Natural killer cell (primary cell): ENCODE measurements at regions of chr6 and their contacts with region 1.

Region 1: GRCh38 chr6:106300944-106301343 is 24.6 kb downstream of the ATG5 start:
- DNase-seq: peak in 1 of 2 donors; percentile 57
- ATAC-seq: peak in 1 of 3 donors; percentile 53
- H3K4me3 ChIP-seq: no peak overlapping the region
- H3K4me3 Mint-ChIP-seq: no peak overlapping the region
- H3K27ac ChIP-seq: no peak overlapping the region
- H3K27ac Mint-ChIP-seq: no peak overlapping the region
- H3K4me1 ChIP-seq: no peaks in the 10 kb centered on the region
- H3K4me1 Mint-ChIP-seq: peaks cover 11 to 16% of the 10 kb centered on the region in 2 donors
- H3K27me3 ChIP-seq: no peaks in the 10 kb centered on the region
- H3K27me3 Mint-ChIP-seq: no peaks in the 10 kb centered on the region
- CTCF ChIP-seq: peak; percentile 34

Region 2: GRCh38 chr6:105431226-105431625 is 869.7 kb before region 1 on chr6:
- intact Hi-C with region 1: loop called (anchors 5 kb)
- DNase-seq: peak in 1 of 2 donors; percentile 76
- ATAC-seq: no peak
- H3K4me3 ChIP-seq: no peak overlapping the region
- H3K4me3 Mint-ChIP-seq: no peak overlapping the region
- H3K27ac ChIP-seq: no peak overlapping the region
- H3K27ac Mint-ChIP-seq: no peak overlapping the region
- H3K4me1 ChIP-seq: no peaks in the 10 kb centered on the region
- H3K4me1 Mint-ChIP-seq: no peaks in the 10 kb centered on the region
- H3K27me3 ChIP-seq: no peaks in the 10 kb centered on the region
- H3K27me3 Mint-ChIP-seq: no peaks in the 10 kb centered on the region
- CTCF ChIP-seq: peak; percentile 68

Region 3: DNA sequence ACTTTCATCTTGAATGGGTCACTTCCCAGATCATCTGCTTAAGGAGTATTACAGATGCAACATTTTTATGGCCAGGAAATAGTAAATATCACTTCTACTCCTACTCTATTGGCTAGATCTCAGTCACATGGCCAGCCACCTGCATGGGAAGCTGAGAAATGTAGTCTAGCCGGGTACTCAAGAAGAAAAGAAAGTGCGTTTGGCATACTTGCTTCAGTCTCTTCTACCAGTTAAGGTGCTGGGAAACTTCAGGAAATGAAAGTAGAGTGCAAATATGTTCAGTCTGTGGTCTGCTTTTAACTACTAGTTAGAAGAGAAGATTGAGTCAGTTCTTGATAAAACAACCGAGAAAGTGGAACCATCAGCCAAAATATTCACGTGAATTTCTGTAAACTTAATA is 1029.2 kb after region 1 on chr6:
- intact Hi-C with region 1: no loop called
- DNase-seq: peak in 1 of 2 donors; percentile 38
- ATAC-seq: peak in 2 of 3 donors; percentile 44 to 57
- H3K4me3 ChIP-seq: no peak overlapping the region
- H3K4me3 Mint-ChIP-seq: peak overlapping the region; percentile 19
- H3K27ac ChIP-seq: no peak overlapping the region
- H3K27ac Mint-ChIP-seq: peak overlapping the region; percentile 0 to 63
- H3K4me1 ChIP-seq: no peaks in the 10 kb centered on the region
- H3K4me1 Mint-ChIP-seq: peaks cover 11 to 27% of the 10 kb centered on the region in 2 donors
- H3K27me3 ChIP-seq: no peaks in the 10 kb centered on the region
- H3K27me3 Mint-ChIP-seq: no peaks in the 10 kb centered on the region
- CTCF ChIP-seq: no peak